ENCODE measurements at regions of chr2 and their contacts with region 1.

Region 1: GRCh38 chr2:69589973-69590652 is 53.4 kb downstream of the AAK1 start:
- DNase-seq: no peak
- ATAC-seq: no peak
- H3K4me3 ChIP-seq: no peak overlapping the region
- H3K4me3 Mint-ChIP-seq: peak overlapping the region; percentile 19
- H3K27ac ChIP-seq: no peak overlapping the region
- H3K27ac Mint-ChIP-seq: peak overlapping the region; percentile 76
- H3K4me1 ChIP-seq: peaks cover 62% of the 10 kb centered on the region
- H3K4me1 Mint-ChIP-seq: peaks cover 82% of the 10 kb centered on the region
- H3K27me3 ChIP-seq: no peaks in the 10 kb centered on the region
- H3K27me3 Mint-ChIP-seq: no peaks in the 10 kb centered on the region
- CTCF ChIP-seq: no peak

Region 2: DNA sequence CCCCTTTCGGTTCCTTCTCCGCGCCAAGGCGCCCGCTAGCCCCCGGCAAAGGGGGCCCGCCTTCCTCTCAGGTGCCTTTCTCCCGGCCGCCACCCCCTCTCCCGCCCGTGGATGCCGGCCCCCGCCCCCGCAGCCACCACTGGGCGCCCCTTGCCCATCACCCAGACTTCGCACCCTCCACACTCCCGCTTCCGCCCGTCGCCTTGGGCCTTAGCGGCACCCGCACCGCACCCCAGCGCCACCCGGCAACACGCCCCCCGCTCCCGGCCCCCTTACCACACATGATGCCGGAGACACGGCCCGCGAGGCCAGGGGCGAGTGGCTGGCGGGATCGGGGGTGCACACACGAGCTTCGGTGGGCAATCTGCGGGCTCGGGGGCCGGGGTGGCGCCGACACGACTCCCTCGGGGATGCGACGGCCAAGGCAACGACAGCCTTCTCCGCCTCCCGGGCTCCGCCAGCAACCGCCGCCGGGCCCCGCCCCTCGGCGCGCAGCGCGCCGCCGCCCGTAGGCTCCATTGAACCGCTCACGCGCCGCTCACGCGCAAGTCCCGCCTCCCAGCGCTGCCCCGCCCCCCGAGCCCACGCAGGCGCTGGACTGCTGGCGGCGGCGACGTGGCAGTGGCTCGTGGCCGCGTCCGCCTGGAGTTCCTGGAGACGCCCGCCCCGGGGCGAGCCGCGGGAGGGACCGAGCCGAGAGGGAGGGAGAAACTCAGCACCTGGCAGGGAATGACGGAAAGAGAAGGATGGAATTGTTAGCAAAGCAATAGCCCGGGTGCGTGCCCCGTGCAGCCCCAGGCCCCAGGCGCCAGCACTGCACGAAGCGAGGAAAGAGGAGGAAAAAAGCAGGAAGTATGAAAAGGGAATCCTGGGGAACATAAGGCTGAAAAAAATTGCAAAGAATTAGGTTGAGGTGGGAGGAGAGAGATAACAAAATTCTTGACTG is 203.1 kb before region 1 on chr2 and contains the start of gene GFPT1:
- CTCF ChIA-PET with region 1: no interaction called
- POLR2A ChIA-PET with region 1: no interaction called
- intact Hi-C with region 1: no loop called
- DNase-seq: peak; percentile 84 to 97 (median 93)
- ATAC-seq: peak; percentile 98
- H3K4me3 ChIP-seq: peak within 1 kb of the TSS; percentile 64 to 68
- H3K4me3 Mint-ChIP-seq: peak within 1 kb of the TSS; percentile 88
- H3K27ac ChIP-seq: peak within 1 kb of the TSS; percentile 65 to 70
- H3K27ac Mint-ChIP-seq: peak within 1 kb of the TSS; percentile 84
- H3K4me1 ChIP-seq: peaks cover 17% of the 10 kb centered on the region
- H3K4me1 Mint-ChIP-seq: peaks cover 45% of the 10 kb centered on the region
- H3K27me3 ChIP-seq: no peaks in the 10 kb centered on the region
- H3K27me3 Mint-ChIP-seq: no peaks in the 10 kb centered on the region
- CTCF ChIP-seq: no peak
- total RNA-seq, gene GFPT1: 26.5 to 30.9 TPM

Region 3: GRCh38 chr2:69601179-69601612 is 11.1 kb after region 1 on chr2:
- CTCF ChIA-PET with region 1: no interaction called
- POLR2A ChIA-PET with region 1: interaction called, 3 read pairs
- intact Hi-C with region 1: loop called in 1 of 2 experiments (anchors 2 kb)
- DNase-seq: no peak
- ATAC-seq: peak; percentile 61
- H3K4me3 ChIP-seq: no peak overlapping the region
- H3K4me3 Mint-ChIP-seq: no peak overlapping the region
- H3K27ac ChIP-seq: no peak overlapping the region
- H3K27ac Mint-ChIP-seq: peak overlapping the region; percentile 55
- H3K4me1 ChIP-seq: peaks cover 85% of the 10 kb centered on the region
- H3K4me1 Mint-ChIP-seq: peaks cover 90% of the 10 kb centered on the region
- H3K27me3 ChIP-seq: no peaks in the 10 kb centered on the region
- H3K27me3 Mint-ChIP-seq: no peaks in the 10 kb centered on the region
- CTCF ChIP-seq: no peak

Measured in CD8-positive, alpha-beta T cell (primary cell).